Testis (tissue), 5 donors: ENCODE measurements at regions of chr19 and their contacts with region 1.

Region 1: DNA sequence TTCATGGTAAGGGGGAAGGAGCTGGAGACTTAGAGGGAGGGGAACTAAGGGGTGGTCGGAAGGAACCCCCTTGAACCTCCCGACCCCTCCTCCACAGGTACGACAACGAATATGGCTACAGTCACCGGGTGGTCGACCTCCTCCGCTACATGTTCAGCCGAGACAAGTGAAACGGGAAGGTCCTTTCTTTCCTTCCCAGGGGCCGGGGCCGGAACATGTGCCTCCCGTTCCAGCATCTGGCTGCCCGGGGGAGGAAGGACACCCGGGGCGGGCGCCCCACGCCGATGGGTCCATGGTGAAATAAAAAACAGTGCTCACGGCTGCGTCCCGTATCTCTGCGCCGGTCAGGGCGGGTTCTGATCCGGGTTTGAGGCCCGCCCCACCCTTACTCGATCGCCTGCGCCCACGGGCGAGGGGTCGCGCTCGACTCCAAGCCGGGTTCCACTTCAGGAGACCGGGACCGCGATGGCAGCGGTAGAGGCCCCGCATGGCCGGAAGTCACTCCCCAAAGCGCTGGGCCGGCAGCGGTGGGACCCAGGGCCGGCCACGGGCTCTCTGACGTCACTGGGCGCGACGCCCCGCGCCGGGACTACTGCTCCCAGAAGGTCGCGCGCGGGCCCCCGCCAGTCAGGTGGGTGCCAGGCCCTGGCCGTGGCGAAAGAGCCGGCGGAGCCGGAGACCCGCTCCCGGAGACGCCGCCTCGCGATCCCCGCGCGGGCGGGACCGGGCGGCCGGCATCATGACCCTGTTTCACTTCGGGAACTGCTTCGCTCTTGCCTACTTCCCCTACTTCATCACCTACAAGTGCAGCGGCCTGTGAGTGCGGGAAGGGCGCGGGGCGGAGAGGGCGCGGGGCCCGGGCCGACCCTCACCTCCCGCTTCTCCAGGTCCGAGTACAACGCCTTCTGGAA is at the start of gene TMEM147:
- DNase-seq: peak; percentile 96
- H3K4me3 ChIP-seq: peak within 1 kb of the TSS; percentile 93
- H3K27ac ChIP-seq: peak within 1 kb of the TSS; percentile 34 to 81
- H3K4me1 ChIP-seq: peaks cover 13% of the 10 kb centered on the region
- H3K27me3 ChIP-seq: no peaks in the 10 kb centered on the region
- CTCF ChIP-seq: peak in 1 of 3 experiments; percentile 14
- POLR2A ChIP-seq: no peak
- total RNA-seq, gene TMEM147: 125 TPM

Region 2: GRCh38 chr19:35648017-35648961 is 103.0 kb after region 1 on chr19 and contains the start of gene COX6B1:
- intact Hi-C with region 1: loop called (anchors 10 kb)
- DNase-seq: peak; percentile 98
- H3K4me3 ChIP-seq: peak within 1 kb of the TSS; percentile 78 to 96
- H3K27ac ChIP-seq: peak within 1 kb of the TSS; percentile 65 to 69
- H3K4me1 ChIP-seq: peaks cover 8% of the 10 kb centered on the region
- H3K27me3 ChIP-seq: no peaks in the 10 kb centered on the region
- CTCF ChIP-seq: no peak
- POLR2A ChIP-seq: no peak
- total RNA-seq, gene COX6B1: 198 to 262 TPM

Region 3: GRCh38 chr19:35716801-35717666 is 171.8 kb after region 1 on chr19:
- intact Hi-C with region 1: loop called (anchors 10 kb)
- DNase-seq: peak; percentile 95
- H3K4me3 ChIP-seq: peak overlapping the region; percentile 79 to 85
- H3K27ac ChIP-seq: peak overlapping the region; percentile 74 to 91
- H3K4me1 ChIP-seq: peaks cover 25% of the 10 kb centered on the region
- H3K27me3 ChIP-seq: no peaks in the 10 kb centered on the region
- CTCF ChIP-seq: peak; percentile 82 to 86 (median 84)
- POLR2A ChIP-seq: no peak